ENCODE measurements at regions of chr6 and their contacts with region 1.

Region 1: DNA sequence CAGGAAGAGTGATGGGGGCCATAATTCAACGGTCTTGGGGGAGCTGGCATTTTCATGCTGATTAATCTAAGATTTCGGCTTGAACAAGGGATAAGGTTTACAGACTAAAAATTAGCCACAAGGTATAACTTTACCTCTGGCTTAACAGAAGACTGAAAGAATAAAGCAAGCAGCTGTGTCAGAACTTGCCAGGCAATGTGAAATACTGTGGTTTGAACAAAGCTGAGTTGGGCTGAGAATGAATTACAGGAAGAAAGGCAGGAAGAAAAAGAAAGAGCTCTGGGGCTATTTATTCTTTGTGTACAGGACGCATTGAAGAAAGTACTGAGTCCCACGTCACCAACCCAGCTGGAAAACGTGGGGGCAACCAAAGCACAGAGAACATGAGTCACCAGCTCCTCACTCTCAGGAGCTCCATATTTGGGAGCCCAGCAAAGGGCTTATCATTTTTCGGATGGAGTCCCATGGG is 121.5 kb upstream of the NEDD9 start:
- DNase-seq: peak; percentile 63
- ATAC-seq: peak; percentile 84 to 86

Region 2: DNA sequence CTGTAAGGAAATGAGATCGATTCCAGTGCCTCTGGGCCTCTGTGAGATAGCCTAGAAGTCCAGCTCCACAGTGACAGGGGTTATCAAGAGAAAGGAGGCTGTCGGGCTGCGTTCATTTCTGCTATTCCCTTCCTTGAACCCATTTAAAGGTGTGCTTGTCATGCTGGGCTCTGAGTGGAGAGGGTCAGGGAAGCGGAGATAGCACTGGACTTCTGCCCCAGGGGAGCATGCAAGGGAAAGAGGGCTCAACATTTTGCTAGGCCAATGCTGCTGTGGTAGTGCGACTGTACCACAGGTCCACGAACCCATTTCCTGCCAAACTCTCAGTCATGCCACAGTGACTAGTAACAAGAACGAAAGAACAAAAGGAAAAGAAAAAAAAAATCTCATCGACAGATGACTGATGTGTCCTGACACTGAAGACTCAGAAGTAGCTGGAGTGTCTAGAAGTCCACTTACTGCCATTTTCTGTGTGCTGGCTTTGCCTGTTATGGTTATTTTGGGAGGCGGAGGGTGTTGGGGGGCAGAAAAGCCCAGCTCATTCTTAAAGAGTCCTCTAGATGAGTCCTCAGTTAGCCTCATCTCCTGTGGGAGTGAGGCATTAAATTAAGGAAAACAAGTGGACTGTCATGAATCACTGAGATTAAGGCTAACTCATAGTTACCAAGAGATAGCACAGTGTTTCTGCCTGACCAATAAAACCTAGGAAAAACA is 129.5 kb before region 1 on chr6:
- intact Hi-C with region 1: loop called in 1 of 2 experiments (anchors 10 kb)
- DNase-seq: no peak
- ATAC-seq: peak; percentile 10 to 79

Measured in left cardiac atrium (tissue), 4 donors.